Aorta (tissue), 5 donors: ENCODE measurements at regions of chr7 and their contacts with region 1.

Region 1: DNA sequence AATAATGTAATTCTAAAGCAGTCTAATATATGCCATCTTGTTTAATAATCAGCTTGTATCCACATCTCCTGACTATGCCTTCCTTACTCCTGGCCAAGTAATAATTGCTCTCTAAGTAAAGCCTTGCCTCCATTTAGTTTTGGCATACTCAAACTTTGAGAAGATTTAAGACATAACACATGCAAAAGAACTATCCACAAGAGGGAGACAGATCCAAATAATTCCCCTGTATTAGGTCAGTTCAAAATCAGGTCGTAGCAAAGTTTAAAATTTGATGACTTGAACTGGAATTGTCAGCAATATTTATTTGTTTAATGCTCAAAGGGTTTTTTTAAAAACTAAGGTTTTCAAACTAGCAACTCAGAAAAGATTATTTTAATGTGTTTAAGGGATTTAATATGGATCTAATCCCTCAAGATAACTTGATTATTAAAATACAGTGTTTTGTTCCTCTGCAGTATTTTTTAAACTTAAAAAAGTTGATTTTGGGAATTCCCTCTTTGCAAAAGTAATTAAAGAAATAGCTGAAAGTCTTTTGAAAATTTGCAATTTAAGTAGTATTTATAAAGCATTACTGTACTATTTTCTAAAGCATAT is 95.3 kb downstream of the HDAC9 start:
- DNase-seq: no peak
- ATAC-seq: peak; percentile 74
- H3K4me3 ChIP-seq: no peak overlapping the region
- H3K27ac ChIP-seq: no peak overlapping the region
- H3K4me1 ChIP-seq: no peaks in the 10 kb centered on the region
- H3K27me3 ChIP-seq: no peaks in the 10 kb centered on the region

Region 2: GRCh38 chr7:18552943-18553584 is 37.8 kb before region 1 on chr7:
- intact Hi-C with region 1: no loop called
- DNase-seq: no peak
- ATAC-seq: no peak
- H3K4me3 ChIP-seq: no peak overlapping the region
- H3K27ac ChIP-seq: peak overlapping the region in 1 of 2 donors; percentile 67
- H3K4me1 ChIP-seq: peaks cover 3 to 12% of the 10 kb centered on the region in 2 donors
- H3K27me3 ChIP-seq: no peaks in the 10 kb centered on the region

Region 3: GRCh38 chr7:18638594-18639452 is 48.0 kb after region 1 on chr7:
- intact Hi-C with region 1: loop called in 1 of 2 experiments (anchors 5 kb)
- DNase-seq: no peak
- ATAC-seq: no peak
- H3K4me3 ChIP-seq: no peak overlapping the region
- H3K27ac ChIP-seq: no peak overlapping the region
- H3K4me1 ChIP-seq: peaks cover 0 to 7% of the 10 kb centered on the region in 2 donors
- H3K27me3 ChIP-seq: no peaks in the 10 kb centered on the region

Region 4: GRCh38 chr7:18666107-18666728 is 75.4 kb after region 1 on chr7:
- intact Hi-C with region 1: loop called in 1 of 2 experiments (anchors 5 kb)
- DNase-seq: peak; percentile 87 to 91
- ATAC-seq: peak; percentile 88
- H3K4me3 ChIP-seq: no peak overlapping the region
- H3K27ac ChIP-seq: no peak overlapping the region
- H3K4me1 ChIP-seq: peaks cover 0 to 3% of the 10 kb centered on the region in 2 donors
- H3K27me3 ChIP-seq: no peaks in the 10 kb centered on the region

Region 5: GRCh38 chr7:19665399-19666008 is 1074.7 kb after region 1 on chr7:
- intact Hi-C with region 1: loop called (anchors 10 kb)
- DNase-seq: no peak
- ATAC-seq: no peak
- H3K4me3 ChIP-seq: no peak overlapping the region
- H3K27ac ChIP-seq: no peak overlapping the region
- H3K4me1 ChIP-seq: no peaks in the 10 kb centered on the region
- H3K27me3 ChIP-seq: no peaks in the 10 kb centered on the region